Heart right ventricle (tissue), 16 donors: ENCODE measurements at regions of chr2 and their contacts with region 1.

Region 1: GRCh38 chr2:152537081-152537651 is 180.1 kb downstream of the PRPF40A start:
- DNase-seq: no peak
- ATAC-seq: peak in 1 of 8 donors; percentile 49
- H3K4me3 ChIP-seq: no peak overlapping the region
- H3K27ac ChIP-seq: no peak overlapping the region
- H3K4me1 ChIP-seq: peaks cover 0 to 22% (median 7%) of the 10 kb centered on the region in 9 donors
- H3K27me3 ChIP-seq: no peaks in the 10 kb centered on the region
- CTCF ChIP-seq: no peak

Region 2: GRCh38 chr2:152222975-152223637 is 314.1 kb before region 1 on chr2:
- intact Hi-C with region 1: no loop called
- DNase-seq: peak; percentile 34 to 84
- ATAC-seq: peak; percentile 49 to 88 (median 70)
- H3K4me3 ChIP-seq: no peak overlapping the region
- H3K27ac ChIP-seq: peak overlapping the region in 1 of 10 donors; percentile 7
- H3K4me1 ChIP-seq: peaks cover 0 to 22% (median 16%) of the 10 kb centered on the region in 9 donors
- H3K27me3 ChIP-seq: no peaks in the 10 kb centered on the region
- CTCF ChIP-seq: no peak

Region 3: DNA sequence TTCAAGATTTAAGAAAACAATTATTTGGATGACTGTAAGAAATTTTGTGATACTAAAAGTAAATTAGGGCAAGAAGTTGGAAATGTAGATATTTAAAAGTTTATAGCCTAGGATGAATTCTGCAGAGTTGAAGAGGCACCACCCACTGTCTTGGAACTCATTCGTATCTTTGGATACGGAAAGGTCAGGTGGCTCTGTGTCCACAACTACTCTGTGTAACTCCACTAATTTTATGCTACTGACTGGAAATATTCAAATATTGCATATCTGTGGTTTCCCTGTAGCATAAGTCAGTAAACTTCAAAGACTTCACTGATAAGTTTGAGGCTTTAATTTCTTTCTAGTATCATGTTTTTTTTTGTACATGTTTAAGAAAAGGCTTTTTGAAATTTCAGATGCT is 1098.3 kb after region 1 on chr2:
- intact Hi-C with region 1: loop called in 1 of 10 experiments (anchors 5 kb)
- DNase-seq: no peak
- ATAC-seq: no peak
- H3K4me3 ChIP-seq: no peak overlapping the region
- H3K27ac ChIP-seq: no peak overlapping the region
- H3K4me1 ChIP-seq: no peaks in the 10 kb centered on the region
- H3K27me3 ChIP-seq: no peaks in the 10 kb centered on the region
- CTCF ChIP-seq: no peak